HepG2 (cell line): ENCODE measurements at regions of chr2 and their contacts with region 1.

Region 1: DNA sequence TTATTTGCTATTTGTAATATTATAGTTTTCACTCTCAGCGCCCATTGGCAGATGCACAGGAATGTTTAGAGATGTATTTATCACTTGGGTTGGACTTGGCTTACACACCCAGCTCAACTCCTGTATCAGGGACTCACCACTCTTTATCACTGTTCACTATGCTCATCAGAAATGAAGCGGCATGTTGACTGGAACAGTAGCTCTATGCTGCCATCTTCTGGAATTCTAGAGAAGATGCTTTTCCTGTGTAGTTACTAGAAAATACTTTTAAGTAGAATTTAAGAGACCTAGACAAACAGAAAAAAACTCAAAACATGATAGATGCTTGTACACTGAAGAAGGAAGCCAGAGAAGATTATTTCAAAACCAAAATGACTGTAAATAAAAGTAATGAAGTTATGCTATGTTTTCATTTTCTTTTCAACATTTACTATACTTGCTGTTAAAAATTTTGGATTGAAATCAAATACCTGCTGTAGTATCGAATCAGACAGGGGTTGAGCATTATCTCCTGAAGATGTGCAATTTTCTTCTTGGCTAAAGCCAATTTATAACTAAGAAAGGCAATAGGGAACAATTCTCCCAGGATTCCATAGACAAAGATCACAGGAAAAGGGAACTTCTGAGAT is 47.4 kb upstream of the NXPH2 start:
- DNase-seq: peak; percentile 74
- ATAC-seq: peak; percentile 81
- H3K4me3 ChIP-seq: no peak overlapping the region
- H3K27ac ChIP-seq: no peak overlapping the region
- H3K4me1 ChIP-seq: no peaks in the 10 kb centered on the region
- H3K27me3 ChIP-seq: no peaks in the 10 kb centered on the region
- CTCF ChIP-seq: peak; percentile 83
- EP300 ChIP-seq: no peak
- POLR2A ChIP-seq: no peak
- RAD21 ChIP-seq: peak; percentile 68

Region 2: GRCh38 chr2:136932700-136933099 is 1894.8 kb before region 1 on chr2:
- CTCF ChIA-PET with region 1: no interaction called
- POLR2A ChIA-PET with region 1: no interaction called
- in situ Hi-C with region 1: no loop called
- intact Hi-C with region 1: loop called (anchors 5 kb)
- DNase-seq: peak; percentile 30
- ATAC-seq: peak; percentile 98
- H3K4me3 ChIP-seq: no peak overlapping the region
- H3K27ac ChIP-seq: no peak overlapping the region
- H3K4me1 ChIP-seq: no peaks in the 10 kb centered on the region
- H3K27me3 ChIP-seq: no peaks in the 10 kb centered on the region
- CTCF ChIP-seq: peak; percentile 80
- EP300 ChIP-seq: no peak
- POLR2A ChIP-seq: no peak
- RAD21 ChIP-seq: peak; percentile 59

Region 3: GRCh38 chr2:137865954-137866540 is 961.5 kb before region 1 on chr2:
- CTCF ChIA-PET with region 1: interaction called, 53 read pairs
- POLR2A ChIA-PET with region 1: no interaction called
- in situ Hi-C with region 1: no loop called
- intact Hi-C with region 1: loop called (anchors 1 kb)
- DNase-seq: peak; percentile 77
- ATAC-seq: peak; percentile 98
- H3K4me3 ChIP-seq: no peak overlapping the region
- H3K27ac ChIP-seq: no peak overlapping the region
- H3K4me1 ChIP-seq: no peaks in the 10 kb centered on the region
- H3K27me3 ChIP-seq: no peaks in the 10 kb centered on the region
- CTCF ChIP-seq: peak; percentile 92
- EP300 ChIP-seq: no peak
- POLR2A ChIP-seq: no peak
- RAD21 ChIP-seq: peak; percentile 84

Region 4: GRCh38 chr2:137910641-137911040 is 916.9 kb before region 1 on chr2:
- CTCF ChIA-PET with region 1: interaction called, 8 read pairs
- POLR2A ChIA-PET with region 1: no interaction called
- in situ Hi-C with region 1: no loop called
- intact Hi-C with region 1: loop called (anchors 1 kb)
- DNase-seq: peak; percentile 55
- ATAC-seq: no peak
- H3K4me3 ChIP-seq: no peak overlapping the region
- H3K27ac ChIP-seq: no peak overlapping the region
- H3K4me1 ChIP-seq: peaks cover 42% of the 10 kb centered on the region
- H3K27me3 ChIP-seq: no peaks in the 10 kb centered on the region
- CTCF ChIP-seq: peak; percentile 66
- EP300 ChIP-seq: peak in 1 of 2 experiments; percentile 30; a peak in 1 of 4 replicates
- POLR2A ChIP-seq: no peak
- RAD21 ChIP-seq: peak; percentile 84

Region 5: GRCh38 chr2:138090330-138090729 is 737.2 kb before region 1 on chr2:
- CTCF ChIA-PET with region 1: no interaction called
- POLR2A ChIA-PET with region 1: no interaction called
- in situ Hi-C with region 1: no loop called
- intact Hi-C with region 1: loop called (anchors 1 kb)
- DNase-seq: peak; percentile 64
- ATAC-seq: peak; percentile 97
- H3K4me3 ChIP-seq: no peak overlapping the region
- H3K27ac ChIP-seq: no peak overlapping the region
- H3K4me1 ChIP-seq: peaks cover 8% of the 10 kb centered on the region
- H3K27me3 ChIP-seq: no peaks in the 10 kb centered on the region
- CTCF ChIP-seq: peak; percentile 79
- EP300 ChIP-seq: no peak
- POLR2A ChIP-seq: no peak
- RAD21 ChIP-seq: peak; percentile 84

Region 6: DNA sequence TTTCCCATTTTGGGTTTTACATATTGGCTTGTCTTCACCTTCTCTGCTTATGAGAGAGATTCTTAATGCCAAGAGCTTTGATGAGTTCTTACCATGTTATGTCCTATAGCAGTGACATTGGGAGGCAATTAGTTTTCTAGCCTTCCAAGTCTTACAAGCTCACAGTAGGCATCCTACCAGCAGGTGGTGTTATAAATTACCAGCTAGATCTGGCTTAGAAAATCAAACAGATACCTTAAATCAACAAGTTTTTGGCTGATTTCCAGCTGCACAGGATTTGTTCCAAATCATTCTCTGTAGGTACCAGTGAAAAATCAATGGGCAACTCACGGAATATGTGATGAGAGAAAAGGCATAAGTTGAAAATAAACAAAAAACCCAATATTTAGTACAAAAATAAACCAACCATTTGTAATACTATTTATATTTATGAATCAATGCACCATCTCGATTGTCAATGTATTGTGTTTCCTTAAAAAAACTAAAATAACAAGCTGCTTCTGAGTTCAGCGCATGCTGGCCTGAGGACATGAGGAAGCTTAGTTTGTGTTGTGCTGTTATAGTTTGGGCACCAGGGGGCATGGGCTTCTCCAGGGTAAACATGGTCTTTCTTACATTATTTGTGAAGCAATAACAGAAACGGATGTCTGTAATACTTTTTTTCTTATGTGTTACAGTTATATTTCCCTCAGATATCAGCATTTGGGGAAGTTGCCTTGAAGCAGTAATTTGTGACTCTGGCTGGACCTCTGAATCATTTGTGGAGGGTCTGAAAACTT is 13.2 kb before region 1 on chr2:
- CTCF ChIA-PET with region 1: interaction called, 10 read pairs
- POLR2A ChIA-PET with region 1: no interaction called
- in situ Hi-C with region 1: no loop called
- intact Hi-C with region 1: loop called (anchors 1 kb)
- DNase-seq: peak; percentile 35
- ATAC-seq: peak; percentile 94
- H3K4me3 ChIP-seq: no peak overlapping the region
- H3K27ac ChIP-seq: no peak overlapping the region
- H3K4me1 ChIP-seq: no peaks in the 10 kb centered on the region
- H3K27me3 ChIP-seq: no peaks in the 10 kb centered on the region
- CTCF ChIP-seq: peak; percentile 41
- EP300 ChIP-seq: no peak
- POLR2A ChIP-seq: no peak
- RAD21 ChIP-seq: no peak